ENCODE measurements at regions of chr3 and their contacts with region 1.

Region 1: GRCh38 chr3:150681057-150681456 is 22.7 kb downstream of the ERICH6 start:
- DNase-seq: peak; percentile 23
- H3K4me3 Mint-ChIP-seq: no peak overlapping the region
- H3K27ac Mint-ChIP-seq: peak overlapping the region; percentile 31
- H3K4me1 Mint-ChIP-seq: peaks cover 16% of the 10 kb centered on the region
- H3K27me3 Mint-ChIP-seq: no peaks in the 10 kb centered on the region

Region 2: DNA sequence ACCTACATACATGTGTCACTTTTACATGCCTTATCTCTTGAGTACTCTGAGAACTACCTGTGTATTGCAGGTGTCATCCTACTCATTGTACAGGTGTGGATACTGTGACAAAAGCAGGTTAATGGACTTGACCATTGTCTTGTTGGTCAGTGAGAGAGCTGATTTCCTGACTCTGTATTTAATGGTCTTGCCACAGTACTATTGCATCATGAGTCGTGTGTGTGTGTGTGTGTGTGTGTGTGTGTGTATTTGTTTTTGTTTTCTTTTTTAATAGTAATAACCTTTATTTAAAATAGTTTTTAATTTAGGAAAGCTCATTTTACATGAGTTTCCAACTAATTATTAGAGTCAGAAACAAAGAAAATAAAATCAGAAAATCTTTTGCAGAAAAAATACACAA is 70.3 kb before region 1 on chr3:
- CTCF ChIA-PET with region 1: no interaction called
- intact Hi-C with region 1: loop called (anchors 2 kb)
- DNase-seq: no peak
- H3K4me3 Mint-ChIP-seq: no peak overlapping the region
- H3K27ac Mint-ChIP-seq: no peak overlapping the region
- H3K4me1 Mint-ChIP-seq: peaks cover 72% of the 10 kb centered on the region
- H3K27me3 Mint-ChIP-seq: no peaks in the 10 kb centered on the region

Region 3: GRCh38 chr3:150703299-150704134 is 22.5 kb after region 1 on chr3 and contains the start of gene ERICH6:
- CTCF ChIA-PET with region 1: interaction called, 5 read pairs
- intact Hi-C with region 1: loop called (anchors 1 kb)
- DNase-seq: peak; percentile 88
- H3K4me3 Mint-ChIP-seq: peak within 1 kb of the TSS; percentile 96
- H3K27ac Mint-ChIP-seq: no peak within 1 kb of the TSS
- H3K4me1 Mint-ChIP-seq: peaks cover 25% of the 10 kb centered on the region
- H3K27me3 Mint-ChIP-seq: no peaks in the 10 kb centered on the region
- total RNA-seq, gene ERICH6: not detected

Measured in activated naive CD4-positive, alpha-beta T cell treated with anti-CD3 and anti-CD28 coated beads for 36 hours (primary cell).